ENCODE measurements at regions of chr21 and their contacts with region 1.

Region 1: GRCh38 chr21:34614633-34615486 is at the start of gene RCAN1:
- DNase-seq: peak; percentile 90
- H3K4me3 ChIP-seq: peak within 1 kb of the TSS; percentile 75 to 86
- H3K27ac ChIP-seq: peak within 1 kb of the TSS; percentile 41 to 48
- H3K4me1 ChIP-seq: peaks cover 2% of the 10 kb centered on the region
- H3K27me3 ChIP-seq: no peaks in the 10 kb centered on the region
- CTCF ChIP-seq: peak in 1 of 4 experiments; percentile 12
- POLR2A ChIP-seq: no peak
- total RNA-seq, gene RCAN1: 12.0 to 14.1 TPM

Region 2: DNA sequence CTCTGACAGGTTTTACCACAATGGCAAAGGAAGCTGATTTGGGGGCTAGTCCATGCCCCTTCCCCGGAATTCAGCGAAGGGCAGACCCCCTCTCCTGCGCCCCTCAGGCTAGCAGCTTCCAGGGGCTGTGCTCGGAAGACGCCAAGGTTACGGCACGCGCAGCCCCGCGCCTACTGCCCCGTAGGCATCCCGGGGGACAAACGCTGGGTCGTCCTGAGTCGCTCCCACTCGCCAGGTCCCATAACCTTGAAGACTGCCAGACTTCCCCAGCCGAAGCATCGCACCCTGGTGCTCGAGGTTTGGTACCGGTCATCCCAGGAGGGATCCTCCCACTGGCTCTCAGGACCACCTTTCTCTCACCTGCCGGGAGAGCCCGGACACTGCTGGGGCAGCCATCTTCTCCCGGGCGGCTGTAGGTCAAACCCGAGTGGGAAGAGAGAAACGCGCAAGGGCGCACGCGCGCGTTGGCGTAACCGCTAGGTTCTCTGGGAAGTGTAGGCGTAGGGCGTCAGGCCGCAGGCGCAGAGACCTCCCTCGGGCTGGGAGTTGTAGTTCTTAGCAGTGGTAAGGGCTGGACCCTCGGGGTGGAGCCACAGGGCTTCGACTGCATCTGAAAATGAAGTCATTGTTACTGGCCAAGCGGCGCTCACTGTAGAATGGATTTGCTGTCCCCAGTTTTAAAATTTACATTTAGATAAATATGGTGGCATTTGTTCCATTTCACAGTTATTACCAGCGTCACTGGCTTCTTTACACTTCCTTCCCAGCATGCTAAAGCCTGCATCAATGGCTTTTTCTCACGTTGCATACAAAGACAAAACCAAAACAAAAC is 699.3 kb before region 1 on chr21 and contains the start of gene ATP5PO:
- intact Hi-C with region 1: loop called (anchors 10 kb)
- DNase-seq: peak; percentile 95
- H3K4me3 ChIP-seq: peak within 1 kb of the TSS; percentile 76 to 93
- H3K27ac ChIP-seq: peak within 1 kb of the TSS; percentile 73 to 82
- H3K4me1 ChIP-seq: no peaks in the 10 kb centered on the region
- H3K27me3 ChIP-seq: no peaks in the 10 kb centered on the region
- CTCF ChIP-seq: peak in 3 of 4 experiments; percentile 6 to 38 (median 33)
- POLR2A ChIP-seq: peak; percentile 91
- total RNA-seq, gene ATP5PO: 143 to 153 TPM

Region 3: GRCh38 chr21:34187935-34188334 is 426.9 kb before region 1 on chr21:
- intact Hi-C with region 1: no loop called
- DNase-seq: no peak
- H3K4me3 ChIP-seq: no peak overlapping the region
- H3K27ac ChIP-seq: no peak overlapping the region
- H3K4me1 ChIP-seq: no peaks in the 10 kb centered on the region
- H3K27me3 ChIP-seq: no peaks in the 10 kb centered on the region
- CTCF ChIP-seq: no peak
- POLR2A ChIP-seq: no peak

Region 4: DNA sequence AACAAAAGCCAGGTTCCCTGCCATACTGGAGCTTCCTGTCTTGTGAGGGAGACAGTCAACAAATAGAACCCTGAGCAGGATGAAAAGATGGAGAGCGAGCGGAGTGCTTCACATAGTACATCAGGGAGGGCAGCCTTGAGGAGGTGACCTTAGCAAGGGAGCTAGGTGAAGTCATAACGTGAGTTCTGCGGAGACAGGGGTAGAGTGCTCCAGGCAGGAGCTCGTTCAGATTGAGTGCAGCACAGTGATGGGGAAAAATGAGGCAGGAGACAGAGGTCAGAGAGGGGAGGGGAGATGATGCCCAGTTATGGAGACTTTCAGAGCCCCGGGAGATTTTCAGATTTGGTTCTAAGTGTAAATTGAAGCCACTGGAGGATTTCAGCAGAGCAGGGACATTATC is 38.7 kb after region 1 on chr21:
- intact Hi-C with region 1: no loop called
- DNase-seq: no peak
- H3K4me3 ChIP-seq: no peak overlapping the region
- H3K27ac ChIP-seq: no peak overlapping the region
- H3K4me1 ChIP-seq: no peaks in the 10 kb centered on the region
- H3K27me3 ChIP-seq: no peaks in the 10 kb centered on the region
- CTCF ChIP-seq: no peak
- POLR2A ChIP-seq: no peak